ENCODE measurements at regions of chr7 and their contacts with region 1.

Region 1: DNA sequence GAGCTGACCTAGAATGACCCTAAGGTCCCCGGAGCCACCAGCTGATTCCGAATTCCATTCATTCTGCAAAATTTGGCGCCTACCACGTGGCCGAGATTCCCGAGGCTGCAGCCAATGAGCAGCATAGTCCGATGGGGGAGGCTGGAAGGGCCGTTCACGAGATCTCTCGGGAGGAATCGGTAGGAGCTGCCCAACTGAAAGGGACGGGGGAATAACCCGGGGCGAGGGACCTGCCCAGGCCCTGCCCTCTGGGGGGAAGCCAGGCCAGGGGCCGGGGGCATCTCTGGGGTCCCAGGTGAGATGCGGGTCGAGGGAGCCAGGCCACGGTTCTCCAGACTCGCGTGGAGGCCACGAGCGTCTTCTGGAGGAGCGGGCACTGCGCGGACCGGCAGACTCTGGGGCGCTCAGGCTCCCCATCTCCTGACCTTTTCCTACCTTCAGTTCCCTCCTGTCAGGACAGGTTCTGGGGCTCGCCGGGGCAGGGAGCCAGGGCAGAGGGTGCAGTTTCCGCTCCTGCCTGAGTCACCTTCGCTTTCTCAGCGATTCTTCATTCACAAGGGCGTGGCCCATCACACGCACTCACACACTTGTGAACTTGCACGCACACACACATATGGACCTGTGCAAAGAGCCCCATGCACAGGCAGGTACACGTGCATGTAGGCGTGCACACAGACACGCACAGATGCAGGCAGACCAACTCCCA is 173.4 kb downstream of the RNF216 start:
- DNase-seq: no peak
- H3K4me3 ChIP-seq: no peak overlapping the region
- H3K27ac ChIP-seq: no peak overlapping the region
- H3K4me1 ChIP-seq: peaks cover 2 to 21% (median 9%) of the 10 kb centered on the region in 4 experiments
- H3K27me3 ChIP-seq: no peaks in the 10 kb centered on the region
- CTCF ChIP-seq: no peak
- EP300 ChIP-seq: no peak
- POLR2A ChIP-seq: peak in 1 of 2 experiments; percentile 27; a peak in 1 of 3 replicates
- RAD21 ChIP-seq: no peak; a peak in 1 of 4 replicates

Region 2: GRCh38 chr7:5526100-5526905 is 81.8 kb before region 1 on chr7:
- CTCF ChIA-PET with region 1: no interaction called
- POLR2A ChIA-PET with region 1: interaction called, 16 read pairs
- DNase-seq: peak in 1 of 2 experiments; percentile 76
- H3K4me3 ChIP-seq: peak overlapping the region in 1 of 4 experiments; percentile 90; a peak in 2 of 8 replicates
- H3K27ac ChIP-seq: peak overlapping the region; percentile 24; the same call in 1 of the 2 replicates
- H3K4me1 ChIP-seq: peaks cover 0 to 21% (median 12%) of the 10 kb centered on the region in 4 experiments; a peak in 6 of 7 replicates
- H3K27me3 ChIP-seq: no peaks in the 10 kb centered on the region
- CTCF ChIP-seq: peak in 1 of 3 experiments; percentile 8; a peak in 1 of 4 replicates
- EP300 ChIP-seq: no peak
- POLR2A ChIP-seq: peak in 1 of 2 experiments; percentile 72; a peak in 2 of 3 replicates
- RAD21 ChIP-seq: peak; percentile 17 to 26; a peak in 2 of 4 replicates

Region 3: GRCh38 chr7:5627745-5628547 is 19.8 kb after region 1 on chr7:
- CTCF ChIA-PET with region 1: interaction called, 16 read pairs
- POLR2A ChIA-PET with region 1: interaction called, 11 read pairs
- DNase-seq: no peak
- H3K4me3 ChIP-seq: no peak overlapping the region
- H3K27ac ChIP-seq: no peak overlapping the region
- H3K4me1 ChIP-seq: peaks cover 0 to 8% (median 3%) of the 10 kb centered on the region in 4 experiments; a peak in 4 of 7 replicates
- H3K27me3 ChIP-seq: no peaks in the 10 kb centered on the region; a peak in 1 of 7 replicates
- CTCF ChIP-seq: no peak
- EP300 ChIP-seq: no peak
- POLR2A ChIP-seq: no peak
- RAD21 ChIP-seq: no peak

Region 4: GRCh38 chr7:5704534-5704922 is 96.4 kb after region 1 on chr7:
- CTCF ChIA-PET with region 1: no interaction called
- POLR2A ChIA-PET with region 1: no interaction called
- DNase-seq: peak; percentile 44 to 71
- H3K4me3 ChIP-seq: no peak overlapping the region
- H3K27ac ChIP-seq: no peak overlapping the region
- H3K4me1 ChIP-seq: peaks cover 0 to 3% (median under 1%) of the 10 kb centered on the region in 4 experiments; a peak in 1 of 7 replicates
- H3K27me3 ChIP-seq: no peaks in the 10 kb centered on the region
- CTCF ChIP-seq: peak in 2 of 3 experiments; percentile 81 to 91; a peak in 3 of 4 replicates
- EP300 ChIP-seq: no peak
- POLR2A ChIP-seq: no peak
- RAD21 ChIP-seq: peak; percentile 90

Measured in H1 (cell line).